Sciatic nerve (tissue), 2 donors: ENCODE measurements at regions of chr7 and their contacts with region 1.

Region 1: GRCh38 chr7:26365077-26365900 is 73.6 kb downstream of the SNX10 start:
- DNase-seq: no peak
- ATAC-seq: peak; percentile 90

Region 2: DNA sequence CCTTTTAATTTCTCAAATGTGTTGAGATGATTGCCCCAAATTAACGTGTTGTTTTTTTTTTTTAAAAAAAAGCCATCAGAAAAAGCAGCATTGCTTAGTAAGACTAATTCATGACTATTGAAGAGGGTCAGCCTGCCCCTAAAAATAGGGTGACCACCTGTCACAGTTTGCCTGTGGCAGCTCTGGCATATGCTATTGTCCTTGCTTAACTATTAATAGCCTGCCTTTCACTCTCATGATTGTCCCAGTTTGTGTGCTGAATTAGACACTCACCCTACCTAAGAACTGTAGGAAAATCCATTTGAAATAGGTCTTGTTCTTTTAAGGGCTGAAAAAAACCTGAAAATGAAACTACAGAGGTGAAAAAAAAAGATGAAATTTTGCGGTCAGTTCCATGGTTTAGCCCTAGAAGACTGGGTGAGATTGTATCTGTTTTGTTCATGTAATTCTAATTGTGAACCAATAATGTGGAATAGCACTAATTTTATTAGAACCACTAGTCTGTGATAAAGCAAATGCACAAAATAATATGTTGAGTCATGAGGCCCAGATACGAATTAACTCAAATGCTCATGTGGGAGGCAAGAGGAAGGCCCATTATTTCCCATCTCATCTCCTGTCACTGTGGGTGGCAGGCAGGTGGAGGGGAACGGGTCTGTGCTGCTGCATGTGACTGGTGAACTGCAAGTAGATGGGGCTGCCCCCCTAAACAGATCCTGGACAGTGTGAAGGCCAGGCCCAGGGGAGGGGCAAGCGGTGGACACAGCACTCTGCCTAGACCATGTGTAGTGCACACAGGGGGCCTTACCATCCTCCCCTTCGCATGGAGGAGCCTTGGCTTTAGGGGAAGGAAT is 478.7 kb before region 1 on chr7:
- intact Hi-C with region 1: loop called (anchors 5 kb)
- DNase-seq: no peak
- ATAC-seq: no peak

Region 3: GRCh38 chr7:26083113-26083512 is 282.2 kb before region 1 on chr7:
- intact Hi-C with region 1: loop called (anchors 10 kb)
- DNase-seq: no peak
- ATAC-seq: no peak

Region 4: DNA sequence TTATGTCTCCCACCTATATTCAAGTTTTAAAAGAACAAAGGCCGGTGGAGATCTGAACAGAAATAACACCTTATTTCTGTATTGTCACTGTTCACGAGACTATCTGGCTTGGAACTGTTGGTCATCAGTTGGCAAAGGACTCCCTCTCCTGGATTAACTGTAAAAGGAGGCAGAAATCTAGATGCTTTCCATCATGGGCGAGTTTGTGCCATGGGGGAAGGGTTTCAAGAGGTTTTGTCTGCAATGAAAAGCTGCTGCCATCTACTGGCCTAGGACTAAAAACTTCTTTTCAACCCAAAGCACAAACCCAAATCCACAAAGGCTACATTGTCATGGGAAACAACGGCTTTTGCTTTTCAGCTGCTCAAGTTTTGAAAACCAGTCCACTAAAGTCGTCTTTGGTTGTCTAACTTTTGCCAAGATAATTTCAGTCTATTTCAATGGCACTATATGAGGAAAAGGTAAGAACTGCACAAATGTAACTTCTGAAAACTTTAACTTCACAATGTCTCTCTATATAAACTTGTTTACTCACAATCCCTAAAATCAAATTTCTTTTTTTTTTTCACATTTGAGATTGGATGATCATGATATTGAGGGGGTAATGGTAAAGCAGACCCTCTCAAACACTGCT is 302.3 kb after region 1 on chr7:
- intact Hi-C with region 1: loop called (anchors 10 kb)
- DNase-seq: no peak
- ATAC-seq: peak; percentile 84